H1 (cell line): ENCODE measurements at regions of chr2 and their contacts with region 1.

Region 1: DNA sequence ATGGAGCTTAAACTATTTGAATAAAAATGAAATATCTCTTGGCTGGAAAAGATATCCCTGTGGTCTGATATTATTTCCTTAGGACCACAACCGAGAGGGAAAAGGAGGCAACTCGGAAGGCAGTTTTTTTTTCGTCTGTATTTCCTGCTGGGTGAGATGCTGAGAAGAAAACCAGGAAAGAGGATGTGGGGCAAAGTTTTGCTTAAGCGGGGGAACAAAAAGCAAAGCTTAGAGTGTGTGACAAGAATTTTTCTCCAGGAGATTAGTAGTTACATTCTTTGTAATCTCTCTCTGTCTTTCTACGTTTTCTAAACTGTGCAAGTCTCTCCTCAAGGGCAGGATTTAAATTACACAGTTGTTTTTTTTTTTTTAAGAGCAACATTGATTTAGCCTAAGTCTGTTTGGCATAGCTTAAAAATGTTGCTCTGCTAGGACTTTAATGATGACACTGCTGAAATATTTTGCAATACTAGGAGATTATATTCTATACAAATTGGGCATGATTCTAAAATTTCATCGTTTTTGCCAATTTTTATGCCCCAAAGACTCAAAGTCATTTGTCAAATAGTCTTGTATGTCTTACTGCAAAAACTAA is 258.5 kb downstream of the KCNS3 start:
- DNase-seq: no peak
- H3K4me3 ChIP-seq: no peak overlapping the region
- H3K27ac ChIP-seq: no peak overlapping the region
- H3K4me1 ChIP-seq: no peaks in the 10 kb centered on the region
- H3K27me3 ChIP-seq: no peaks in the 10 kb centered on the region
- CTCF ChIP-seq: no peak
- EP300 ChIP-seq: no peak
- POLR2A ChIP-seq: no peak
- RAD21 ChIP-seq: no peak

Region 2: GRCh38 chr2:18149645-18150246 is 12.8 kb after region 1 on chr2:
- CTCF ChIA-PET with region 1: interaction called, 31 read pairs
- POLR2A ChIA-PET with region 1: no interaction called
- DNase-seq: no peak
- H3K4me3 ChIP-seq: no peak overlapping the region
- H3K27ac ChIP-seq: no peak overlapping the region
- H3K4me1 ChIP-seq: no peaks in the 10 kb centered on the region
- H3K27me3 ChIP-seq: no peaks in the 10 kb centered on the region
- CTCF ChIP-seq: peak in 2 of 3 experiments; percentile 50 to 69; a peak in 2 of 4 replicates
- EP300 ChIP-seq: no peak
- POLR2A ChIP-seq: no peak
- RAD21 ChIP-seq: peak; percentile 68

Region 3: GRCh38 chr2:18171191-18172139 is 34.5 kb after region 1 on chr2:
- CTCF ChIA-PET with region 1: no interaction called
- POLR2A ChIA-PET with region 1: no interaction called
- DNase-seq: no peak
- H3K4me3 ChIP-seq: no peak overlapping the region
- H3K27ac ChIP-seq: no peak overlapping the region
- H3K4me1 ChIP-seq: no peaks in the 10 kb centered on the region
- H3K27me3 ChIP-seq: no peaks in the 10 kb centered on the region
- CTCF ChIP-seq: no peak
- EP300 ChIP-seq: no peak
- POLR2A ChIP-seq: no peak
- RAD21 ChIP-seq: no peak